Mucosa of descending colon (tissue), 3 donors: ENCODE measurements at regions of chr3 and their contacts with region 1.

Region 1: GRCh38 chr3:110314512-110315114 is 757.0 kb upstream of the NECTIN3 start:
- DNase-seq: peak in 1 of 3 donors; percentile 83
- ATAC-seq: peak; percentile 72
- H3K4me3 ChIP-seq: no peak overlapping the region
- H3K4me1 ChIP-seq: no peaks in the 10 kb centered on the region
- CTCF ChIP-seq: peak; percentile 60

Region 2: GRCh38 chr3:109607897-109608296 is 706.7 kb before region 1 on chr3:
- intact Hi-C with region 1: no loop called
- DNase-seq: no peak
- ATAC-seq: no peak
- H3K4me3 ChIP-seq: no peak overlapping the region
- H3K4me1 ChIP-seq: no peaks in the 10 kb centered on the region
- CTCF ChIP-seq: no peak

Region 3: GRCh38 chr3:109731620-109732473 is 582.8 kb before region 1 on chr3:
- intact Hi-C with region 1: loop called in 1 of 2 experiments (anchors 2 kb)
- DNase-seq: peak in 1 of 3 donors; percentile 88
- ATAC-seq: peak; percentile 83
- H3K4me3 ChIP-seq: no peak overlapping the region
- H3K4me1 ChIP-seq: peaks cover 7% of the 10 kb centered on the region
- CTCF ChIP-seq: peak; percentile 79

Region 4: DNA sequence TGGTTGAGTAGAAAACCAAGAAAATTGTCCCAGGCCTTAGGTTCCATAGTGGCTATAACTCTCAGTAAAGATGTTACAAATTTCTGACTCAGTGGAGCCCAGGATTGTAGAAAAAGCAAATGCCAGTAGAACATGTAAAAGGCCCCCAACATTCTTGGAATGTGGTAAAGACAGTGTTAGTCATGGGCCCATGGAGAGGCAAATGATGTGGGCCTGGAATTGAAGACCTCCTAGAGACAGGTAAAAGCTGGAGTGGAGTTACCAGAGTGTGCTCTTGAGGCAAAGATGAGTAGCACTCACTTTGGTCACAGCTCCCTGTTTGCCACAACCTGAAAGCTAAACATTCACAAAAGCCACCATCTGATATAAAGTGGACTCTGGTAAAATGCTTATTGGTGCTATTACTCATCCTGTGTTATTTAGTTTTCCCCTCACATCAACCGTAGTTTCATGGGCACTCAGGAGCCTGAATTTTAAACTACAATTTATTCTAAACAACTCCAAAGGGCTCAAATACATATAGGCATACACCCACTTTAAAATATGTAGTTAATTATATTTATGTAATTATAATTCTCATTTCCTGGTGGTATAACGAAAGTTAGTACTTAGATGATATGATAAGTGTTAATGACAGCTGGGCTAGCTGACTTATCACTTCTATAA is 397.4 kb after region 1 on chr3:
- intact Hi-C with region 1: no loop called
- DNase-seq: no peak
- ATAC-seq: no peak
- H3K4me3 ChIP-seq: no peak overlapping the region
- H3K4me1 ChIP-seq: no peaks in the 10 kb centered on the region
- CTCF ChIP-seq: no peak

Region 5: GRCh38 chr3:111071257-111072015 is 756.8 kb after region 1 on chr3 and contains the start of gene NECTIN3:
- intact Hi-C with region 1: no loop called
- DNase-seq: peak; percentile 94 to 97 (median 96)
- ATAC-seq: peak; percentile 90
- H3K4me3 ChIP-seq: peak within 1 kb of the TSS; percentile 87
- H3K4me1 ChIP-seq: peaks cover 10% of the 10 kb centered on the region
- CTCF ChIP-seq: no peak
- total RNA-seq, gene NECTIN3: 36.5 to 60.7 (median 43.8) TPM